ENCODE measurements at regions of chr16 and their contacts with region 1.

Region 1: GRCh38 chr16:79601931-79602627 is 1.5 kb upstream of the MAF start:
- DNase-seq: peak; percentile 87
- H3K4me3 ChIP-seq: peak overlapping the region; percentile 45 to 76 (median 69)
- H3K27ac ChIP-seq: peak overlapping the region; percentile 87 to 94 (median 90)
- H3K4me1 ChIP-seq: peaks cover 0 to 29% (median 17%) of the 10 kb centered on the region in 4 donors
- H3K27me3 ChIP-seq: no peaks in the 10 kb centered on the region
- CTCF ChIP-seq: peak; percentile 62 to 83 (median 78)
- EP300 ChIP-seq: no peak
- POLR2A ChIP-seq: no peak

Region 2: GRCh38 chr16:78122774-78123315 is 1479.2 kb before region 1 on chr16:
- intact Hi-C with region 1: loop called (anchors 5 kb)
- DNase-seq: no peak
- H3K4me3 ChIP-seq: no peak overlapping the region
- H3K27ac ChIP-seq: peak overlapping the region in 2 of 4 donors; percentile 29 to 44
- H3K4me1 ChIP-seq: peaks cover 0 to 14% (median 10%) of the 10 kb centered on the region in 4 donors
- H3K27me3 ChIP-seq: no peaks in the 10 kb centered on the region
- CTCF ChIP-seq: peak in 3 of 4 experiments; percentile 42 to 51 (median 45)
- EP300 ChIP-seq: no peak
- POLR2A ChIP-seq: no peak

Region 3: GRCh38 chr16:78503602-78504001 is 1098.5 kb before region 1 on chr16:
- intact Hi-C with region 1: loop called (anchors 1 kb)
- DNase-seq: peak; percentile 79
- H3K4me3 ChIP-seq: no peak overlapping the region
- H3K27ac ChIP-seq: peak overlapping the region in 2 of 4 donors; percentile 71 to 72
- H3K4me1 ChIP-seq: peaks cover 0 to 38% (median 29%) of the 10 kb centered on the region in 4 donors
- H3K27me3 ChIP-seq: no peaks in the 10 kb centered on the region
- CTCF ChIP-seq: peak; percentile 74 to 85 (median 79)
- EP300 ChIP-seq: no peak
- POLR2A ChIP-seq: no peak

Region 4: DNA sequence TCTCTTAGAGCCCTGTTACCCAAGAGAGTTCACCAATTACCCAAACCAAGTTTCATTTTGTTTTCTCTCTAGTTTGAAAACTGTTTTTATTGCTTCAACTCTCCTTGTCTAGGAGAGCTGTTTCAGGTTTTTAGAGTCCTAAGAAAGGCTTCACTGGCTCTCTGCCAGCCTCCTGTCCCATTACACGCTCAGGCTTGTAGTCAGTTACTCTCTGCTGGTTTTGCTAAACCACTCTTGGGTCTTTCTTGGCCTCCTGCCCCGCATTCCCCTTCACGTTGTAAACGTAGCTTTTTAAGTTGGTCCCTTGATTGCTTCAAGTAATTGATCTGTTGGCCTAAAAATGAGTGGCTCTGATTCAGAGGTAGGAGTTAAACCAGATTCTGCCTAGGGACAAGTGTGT is 530.7 kb before region 1 on chr16:
- intact Hi-C with region 1: loop called (anchors 10 kb)
- DNase-seq: peak; percentile 79
- H3K4me3 ChIP-seq: no peak overlapping the region
- H3K27ac ChIP-seq: peak overlapping the region; percentile 65 to 75 (median 67)
- H3K4me1 ChIP-seq: peaks cover 0 to 60% (median 32%) of the 10 kb centered on the region in 4 donors
- H3K27me3 ChIP-seq: no peaks in the 10 kb centered on the region
- CTCF ChIP-seq: no peak
- EP300 ChIP-seq: no peak
- POLR2A ChIP-seq: no peak

Region 5: GRCh38 chr16:79169239-79169638 is 432.8 kb before region 1 on chr16:
- intact Hi-C with region 1: no loop called
- DNase-seq: no peak
- H3K4me3 ChIP-seq: no peak overlapping the region
- H3K27ac ChIP-seq: no peak overlapping the region
- H3K4me1 ChIP-seq: peaks cover 0 to 19% (median 3%) of the 10 kb centered on the region in 4 donors
- H3K27me3 ChIP-seq: no peaks in the 10 kb centered on the region
- CTCF ChIP-seq: no peak
- EP300 ChIP-seq: no peak
- POLR2A ChIP-seq: no peak

Region 6: GRCh38 chr16:79767421-79768275 is 165.6 kb after region 1 on chr16:
- intact Hi-C with region 1: loop called (anchors 2 kb)
- DNase-seq: no peak
- H3K4me3 ChIP-seq: peak overlapping the region; percentile 1 to 44 (median 36)
- H3K27ac ChIP-seq: peak overlapping the region; percentile 80 to 86 (median 83)
- H3K4me1 ChIP-seq: peaks cover 0 to 50% (median 40%) of the 10 kb centered on the region in 4 donors
- H3K27me3 ChIP-seq: no peaks in the 10 kb centered on the region
- CTCF ChIP-seq: peak in 1 of 4 experiments; percentile 35
- EP300 ChIP-seq: no peak
- POLR2A ChIP-seq: no peak

Region 7: DNA sequence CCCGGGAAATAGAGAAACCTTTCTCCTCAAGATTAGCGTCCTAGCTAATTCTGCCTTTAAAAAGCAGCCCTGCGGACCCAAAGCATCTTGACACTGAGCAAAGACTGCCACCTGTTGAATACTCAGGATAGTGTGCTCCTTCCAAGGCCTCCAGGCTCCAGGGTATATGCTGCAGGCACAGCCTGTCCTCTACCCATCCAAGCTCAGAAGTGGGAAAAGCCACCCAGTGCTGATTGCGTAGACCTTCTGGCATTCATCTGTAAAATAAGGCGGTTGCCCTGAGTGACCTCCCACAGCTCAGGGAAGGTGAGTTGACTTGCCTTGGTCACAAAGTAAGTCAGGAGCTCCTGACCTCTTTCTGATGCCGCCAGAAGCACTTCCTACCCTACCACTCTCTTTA is 482.6 kb after region 1 on chr16:
- intact Hi-C with region 1: loop called (anchors 5 kb)
- DNase-seq: peak; percentile 82
- H3K4me3 ChIP-seq: no peak overlapping the region
- H3K27ac ChIP-seq: no peak overlapping the region
- H3K4me1 ChIP-seq: peaks cover 0 to 6% (median 2%) of the 10 kb centered on the region in 4 donors
- H3K27me3 ChIP-seq: no peaks in the 10 kb centered on the region
- CTCF ChIP-seq: peak in 3 of 4 experiments; percentile 54 to 74 (median 73)
- EP300 ChIP-seq: no peak
- POLR2A ChIP-seq: no peak

Measured in sigmoid colon (tissue), 7 donors.